Activated CD4-positive, alpha-beta T cell treated with anti-CD3 and anti-CD28 coated beads, Interleukin-2, amount 10 ng/mL, durations not matched to agents 24 days and 14 days (primary cell): ENCODE measurements at regions of chr12 and their contacts with region 1.

Region 1: GRCh38 chr12:76031537-76032073 is at the start of gene PHLDA1:
- DNase-seq: peak; percentile 98
- H3K4me3 Mint-ChIP-seq: peak within 1 kb of the TSS; percentile 99
- H3K27ac Mint-ChIP-seq: peak within 1 kb of the TSS; percentile 99
- H3K4me1 Mint-ChIP-seq: peaks cover 35% of the 10 kb centered on the region
- H3K27me3 Mint-ChIP-seq: peaks cover 2% of the 10 kb centered on the region
- total RNA-seq, gene PHLDA1: 59.6 and 60.7 TPM in 2 replicates

Region 2: DNA sequence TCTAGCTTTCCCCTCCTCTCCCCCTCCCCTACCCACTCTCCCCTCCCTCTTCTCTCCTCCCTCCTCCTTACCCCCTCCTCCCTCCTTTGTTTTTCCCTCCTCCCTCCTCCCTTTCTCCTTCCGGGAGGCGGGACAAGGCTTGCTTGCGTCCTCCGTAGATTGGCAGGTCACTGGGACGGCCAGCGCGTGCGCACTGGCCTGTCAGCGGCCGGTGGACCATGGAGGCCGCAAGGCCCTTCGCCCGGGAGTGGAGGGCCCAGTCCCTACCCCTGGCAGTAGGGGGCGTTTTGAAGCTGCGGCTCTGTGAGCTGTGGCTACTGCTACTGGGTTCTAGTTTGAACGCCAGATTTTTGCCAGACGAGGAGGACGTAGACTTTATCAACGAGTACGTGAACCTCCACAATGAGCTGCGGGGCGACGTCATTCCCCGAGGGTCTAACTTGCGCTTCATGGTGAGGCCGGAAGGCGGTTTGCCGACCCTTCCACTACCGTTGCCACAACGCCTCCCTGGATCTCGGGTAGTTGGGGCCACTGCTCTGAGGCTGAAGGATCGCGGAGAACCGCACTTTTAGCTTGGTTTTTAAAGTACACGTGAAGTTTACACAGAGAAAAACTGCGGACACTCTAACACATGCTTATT is 640.6 kb before region 1 on chr12 and contains the start of gene GLIPR1L2:
- intact Hi-C with region 1: loop called (anchors 5 kb)
- DNase-seq: peak; percentile 95
- H3K4me3 Mint-ChIP-seq: peak within 1 kb of the TSS; percentile 94
- H3K27ac Mint-ChIP-seq: peak within 1 kb of the TSS; percentile 92
- H3K4me1 Mint-ChIP-seq: peaks cover 27% of the 10 kb centered on the region
- H3K27me3 Mint-ChIP-seq: peaks cover 3% of the 10 kb centered on the region
- total RNA-seq, gene GLIPR1L2: 0.36 TPM in 1 of 2 replicates, not detected in the other

Region 3: GRCh38 chr12:75511116-75512048 is 520.2 kb before region 1 on chr12 and contains the start of gene KRR1:
- intact Hi-C with region 1: loop called (anchors 1 kb)
- DNase-seq: peak; percentile 97
- H3K4me3 Mint-ChIP-seq: peak within 1 kb of the TSS; percentile 98
- H3K27ac Mint-ChIP-seq: peak within 1 kb of the TSS; percentile 100
- H3K4me1 Mint-ChIP-seq: peaks cover 31% of the 10 kb centered on the region
- H3K27me3 Mint-ChIP-seq: peaks cover 3% of the 10 kb centered on the region
- total RNA-seq, gene KRR1: 134 and 141 TPM in 2 replicates

Region 4: DNA sequence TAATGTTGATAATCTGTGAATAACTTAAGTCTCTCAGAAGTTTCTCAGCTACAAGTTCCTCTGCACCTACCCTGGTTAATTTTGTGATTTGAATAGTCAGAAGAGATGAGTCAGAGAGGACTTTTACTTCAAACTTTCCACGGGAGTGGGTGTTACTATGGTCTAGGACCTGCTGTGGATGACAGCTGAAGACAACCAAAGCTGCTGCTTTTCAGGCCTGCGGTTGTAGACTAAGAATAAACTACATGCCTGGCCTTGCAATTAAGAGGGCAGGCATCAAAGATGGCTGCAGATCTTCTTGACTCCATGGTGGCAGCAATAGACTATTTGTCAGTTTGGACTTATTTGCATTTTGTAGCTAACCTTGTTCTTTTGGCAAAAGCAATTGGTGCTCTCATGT is 293.1 kb before region 1 on chr12:
- intact Hi-C with region 1: loop called (anchors 5 kb)
- DNase-seq: peak; percentile 64
- H3K4me3 Mint-ChIP-seq: no peak overlapping the region
- H3K27ac Mint-ChIP-seq: peak overlapping the region; percentile 59
- H3K4me1 Mint-ChIP-seq: peaks cover 17% of the 10 kb centered on the region
- H3K27me3 Mint-ChIP-seq: peaks cover 5% of the 10 kb centered on the region

Region 5: GRCh38 chr12:75944097-75944904 is 87.3 kb before region 1 on chr12:
- intact Hi-C with region 1: loop called (anchors 1 kb)
- DNase-seq: peak; percentile 77
- H3K4me3 Mint-ChIP-seq: peak overlapping the region; percentile 67
- H3K27ac Mint-ChIP-seq: peak overlapping the region; percentile 99
- H3K4me1 Mint-ChIP-seq: peaks cover 32% of the 10 kb centered on the region
- H3K27me3 Mint-ChIP-seq: no peaks in the 10 kb centered on the region

Region 6: DNA sequence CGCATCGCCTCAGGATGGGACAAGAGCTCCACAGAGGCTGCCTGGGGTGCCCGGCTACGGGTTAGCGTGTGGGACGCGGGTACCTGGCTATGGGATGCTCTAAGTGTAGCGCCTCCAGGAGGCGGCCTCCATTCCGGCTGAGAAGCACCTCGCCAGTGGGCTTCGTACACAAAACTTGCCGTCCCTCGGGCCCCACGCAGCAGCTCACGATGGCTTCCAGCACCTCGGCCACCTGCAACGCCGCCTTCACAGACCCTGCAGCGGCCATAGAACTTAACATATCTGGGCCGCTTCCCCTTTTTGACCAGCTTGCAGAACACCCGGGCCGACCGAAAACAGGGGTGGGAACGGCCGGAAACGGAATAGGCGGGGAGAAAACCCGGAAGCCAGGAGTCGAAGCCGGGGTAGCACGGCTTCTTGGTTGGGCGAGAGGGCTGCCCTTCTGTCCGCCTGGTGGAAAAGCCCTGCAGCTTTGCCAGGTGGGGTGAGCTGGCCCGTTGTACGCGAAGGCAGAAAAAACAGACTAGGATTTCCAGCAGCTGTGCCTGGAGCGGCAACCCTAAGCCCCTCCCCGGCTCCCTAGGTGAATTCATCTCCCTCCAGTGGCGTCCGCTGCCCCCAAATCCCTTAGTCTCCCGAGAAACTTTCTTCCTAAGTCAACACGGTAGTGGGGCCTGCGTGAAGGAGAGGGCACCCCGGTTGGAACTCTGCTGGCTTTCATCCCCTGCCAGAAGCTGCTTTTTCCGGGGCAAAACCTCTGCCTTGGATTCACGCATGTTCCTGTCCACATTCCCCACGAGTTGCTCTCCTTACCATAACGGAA is 316.7 kb after region 1 on chr12 and contains the start of gene BBS10:
- intact Hi-C with region 1: loop called (anchors 5 kb)
- DNase-seq: peak; percentile 96
- H3K4me3 Mint-ChIP-seq: peak within 1 kb of the TSS; percentile 97
- H3K27ac Mint-ChIP-seq: peak within 1 kb of the TSS; percentile 88
- H3K4me1 Mint-ChIP-seq: peaks cover 23% of the 10 kb centered on the region
- H3K27me3 Mint-ChIP-seq: no peaks in the 10 kb centered on the region
- total RNA-seq, gene BBS10: 3.8 and 4.7 TPM in 2 replicates